ENCODE measurements at regions of chr17 and their contacts with region 1.

Region 1: DNA sequence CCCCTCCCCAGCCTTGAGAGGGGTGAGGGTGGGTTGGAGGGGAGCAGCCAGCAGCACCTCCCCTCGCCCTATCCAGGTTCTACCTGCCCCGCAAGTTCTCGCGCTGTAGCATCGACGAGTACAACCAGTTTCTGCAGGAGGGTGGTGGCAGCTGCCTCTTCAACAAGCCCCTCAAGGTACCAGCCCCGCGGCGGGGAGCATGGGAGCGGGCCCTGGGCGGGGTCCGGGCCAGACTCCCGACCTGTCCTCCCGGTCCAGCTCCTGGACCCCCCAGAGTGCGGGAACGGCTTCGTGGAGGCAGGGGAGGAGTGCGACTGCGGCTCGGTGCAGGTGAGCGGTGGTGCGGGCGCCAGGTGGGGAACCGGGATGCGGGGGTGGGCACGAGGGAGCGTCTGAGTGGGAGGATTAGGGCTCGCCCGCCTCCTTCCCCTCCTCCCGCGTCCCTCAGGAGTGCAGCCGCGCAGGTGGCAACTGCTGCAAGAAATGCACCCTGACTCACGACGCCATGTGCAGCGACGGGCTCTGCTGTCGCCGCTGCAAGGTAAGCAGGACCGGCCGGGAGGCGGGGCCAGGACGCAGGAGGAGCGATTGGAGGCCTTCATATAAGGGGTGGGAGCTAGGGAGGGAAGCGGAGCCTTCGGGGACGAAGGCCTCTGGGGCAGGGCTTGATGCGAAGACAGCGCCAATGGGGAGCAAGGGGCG is 16.5 kb downstream of the ADAM11 start:
- DNase-seq: peak; percentile 91
- ATAC-seq: peak; percentile 96
- H3K4me3 ChIP-seq: peak overlapping the region; percentile 76; the same call in 1 of the 2 replicates
- H3K27ac ChIP-seq: no peak overlapping the region
- H3K4me1 ChIP-seq: peaks cover 6% of the 10 kb centered on the region; the same call in 1 of the 2 replicates
- H3K27me3 ChIP-seq: no peaks in the 10 kb centered on the region; a peak in 1 of 4 replicates
- CTCF ChIP-seq: no peak
- EP300 ChIP-seq: no peak
- POLR2A ChIP-seq: peak; percentile 69
- RAD21 ChIP-seq: no peak

Region 2: DNA sequence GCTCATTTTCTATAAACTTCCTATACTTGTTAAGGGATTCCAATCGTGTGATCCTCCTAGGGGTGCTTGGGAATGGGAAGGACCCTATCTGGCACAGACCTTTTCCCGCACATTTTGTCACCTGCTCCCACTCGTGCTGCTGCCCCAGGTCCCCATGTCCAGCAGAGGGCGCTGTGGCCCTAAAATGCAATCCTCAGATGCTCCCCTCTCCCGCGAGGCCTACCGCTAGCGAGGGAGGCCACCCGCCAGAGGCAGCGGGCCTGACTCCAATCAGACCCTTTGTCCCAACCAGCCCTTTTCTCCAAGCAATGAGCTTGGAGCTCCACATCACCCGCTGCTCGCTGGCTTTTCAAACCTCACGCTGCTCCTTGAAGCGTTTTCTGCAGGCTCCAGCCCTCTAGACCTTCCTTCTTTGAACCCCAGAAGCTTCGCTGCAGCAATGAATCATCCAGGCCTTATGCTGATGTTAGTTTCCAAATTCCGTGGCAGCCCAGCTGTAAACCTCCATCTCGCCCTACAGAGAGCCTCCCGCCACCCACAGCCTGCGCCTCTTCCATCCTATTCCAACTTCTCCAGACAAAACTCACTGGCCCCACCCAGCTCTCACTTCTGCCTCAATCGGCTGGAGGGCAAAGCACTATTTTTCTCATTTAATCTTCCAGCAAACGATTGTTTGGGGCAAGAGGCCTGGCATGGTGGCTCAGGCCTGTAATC is 241.6 kb before region 1 on chr17:
- CTCF ChIA-PET with region 1: interaction called, 4 read pairs
- POLR2A ChIA-PET with region 1: no interaction called
- RAD21 ChIA-PET with region 1: no interaction called
- SMC1A ChIA-PET with region 1: interaction called, 5 read pairs
- in situ Hi-C with region 1: no loop called
- intact Hi-C with region 1: loop called (anchors 10 kb)
- DNase-seq: no peak
- ATAC-seq: peak; percentile 99
- H3K4me3 ChIP-seq: no peak overlapping the region
- H3K27ac ChIP-seq: no peak overlapping the region
- H3K4me1 ChIP-seq: peaks cover 10% of the 10 kb centered on the region
- H3K27me3 ChIP-seq: no peaks in the 10 kb centered on the region
- CTCF ChIP-seq: peak; percentile 93 to 98 (median 95)
- EP300 ChIP-seq: no peak
- POLR2A ChIP-seq: no peak
- RAD21 ChIP-seq: peak; percentile 94

Region 3: GRCh38 chr17:44797802-44798201 is 22.5 kb after region 1 on chr17:
- CTCF ChIA-PET with region 1: interaction called, 13 read pairs
- POLR2A ChIA-PET with region 1: no interaction called
- RAD21 ChIA-PET with region 1: interaction called, 3 read pairs
- SMC1A ChIA-PET with region 1: no interaction called
- in situ Hi-C with region 1: no loop called
- intact Hi-C with region 1: no loop called
- DNase-seq: no peak
- ATAC-seq: no peak
- H3K4me3 ChIP-seq: no peak overlapping the region
- H3K27ac ChIP-seq: no peak overlapping the region
- H3K4me1 ChIP-seq: no peaks in the 10 kb centered on the region
- H3K27me3 ChIP-seq: no peaks in the 10 kb centered on the region
- CTCF ChIP-seq: no peak
- EP300 ChIP-seq: no peak
- POLR2A ChIP-seq: no peak
- RAD21 ChIP-seq: no peak

Region 4: GRCh38 chr17:44864866-44865660 is 89.8 kb after region 1 on chr17:
- CTCF ChIA-PET with region 1: interaction called, 175 read pairs
- POLR2A ChIA-PET with region 1: no interaction called
- RAD21 ChIA-PET with region 1: interaction called, 13 read pairs
- SMC1A ChIA-PET with region 1: interaction called, 19 read pairs
- in situ Hi-C with region 1: loop called (anchors 5 kb)
- intact Hi-C with region 1: loop called (anchors 1 kb)
- DNase-seq: no peak
- ATAC-seq: peak; percentile 92
- H3K4me3 ChIP-seq: no peak overlapping the region
- H3K27ac ChIP-seq: no peak overlapping the region
- H3K4me1 ChIP-seq: no peaks in the 10 kb centered on the region
- H3K27me3 ChIP-seq: no peaks in the 10 kb centered on the region
- CTCF ChIP-seq: peak; percentile 72 to 88 (median 78)
- EP300 ChIP-seq: no peak
- POLR2A ChIP-seq: no peak
- RAD21 ChIP-seq: peak; percentile 58

Region 5: GRCh38 chr17:44878627-44879221 is 103.4 kb after region 1 on chr17:
- CTCF ChIA-PET with region 1: interaction called, 21 read pairs
- POLR2A ChIA-PET with region 1: no interaction called
- RAD21 ChIA-PET with region 1: interaction called, 5 read pairs
- SMC1A ChIA-PET with region 1: interaction called, 4 read pairs
- in situ Hi-C with region 1: no loop called
- intact Hi-C with region 1: no loop called
- DNase-seq: no peak
- ATAC-seq: 0 out of 3 replicates have a peak, but pooled peaks have one; percentile 18
- H3K4me3 ChIP-seq: no peak overlapping the region
- H3K27ac ChIP-seq: no peak overlapping the region
- H3K4me1 ChIP-seq: no peaks in the 10 kb centered on the region
- H3K27me3 ChIP-seq: no peaks in the 10 kb centered on the region
- CTCF ChIP-seq: peak; percentile 43 to 58 (median 45); a peak in 5 of 6 replicates
- EP300 ChIP-seq: no peak
- POLR2A ChIP-seq: no peak
- RAD21 ChIP-seq: peak; percentile 34

Region 6: GRCh38 chr17:45021607-45022287 is 246.5 kb after region 1 on chr17:
- CTCF ChIA-PET with region 1: interaction called, 12 read pairs
- POLR2A ChIA-PET with region 1: interaction called, 5 read pairs
- RAD21 ChIA-PET with region 1: interaction called, 3 read pairs
- SMC1A ChIA-PET with region 1: no interaction called
- in situ Hi-C with region 1: no loop called
- intact Hi-C with region 1: loop called (anchors 5 kb)
- DNase-seq: no peak
- ATAC-seq: peak; percentile 86
- H3K4me3 ChIP-seq: no peak overlapping the region
- H3K27ac ChIP-seq: no peak overlapping the region
- H3K4me1 ChIP-seq: peaks cover 29% of the 10 kb centered on the region
- H3K27me3 ChIP-seq: peaks cover 0 to 6% of the 10 kb centered on the region in 2 experiments; a peak in 2 of 4 replicates
- CTCF ChIP-seq: peak; percentile 62 to 89 (median 74); a peak in 5 of 6 replicates
- EP300 ChIP-seq: no peak
- POLR2A ChIP-seq: peak; percentile 44; the same call in 1 of the 2 replicates
- RAD21 ChIP-seq: peak; percentile 74

Region 7: DNA sequence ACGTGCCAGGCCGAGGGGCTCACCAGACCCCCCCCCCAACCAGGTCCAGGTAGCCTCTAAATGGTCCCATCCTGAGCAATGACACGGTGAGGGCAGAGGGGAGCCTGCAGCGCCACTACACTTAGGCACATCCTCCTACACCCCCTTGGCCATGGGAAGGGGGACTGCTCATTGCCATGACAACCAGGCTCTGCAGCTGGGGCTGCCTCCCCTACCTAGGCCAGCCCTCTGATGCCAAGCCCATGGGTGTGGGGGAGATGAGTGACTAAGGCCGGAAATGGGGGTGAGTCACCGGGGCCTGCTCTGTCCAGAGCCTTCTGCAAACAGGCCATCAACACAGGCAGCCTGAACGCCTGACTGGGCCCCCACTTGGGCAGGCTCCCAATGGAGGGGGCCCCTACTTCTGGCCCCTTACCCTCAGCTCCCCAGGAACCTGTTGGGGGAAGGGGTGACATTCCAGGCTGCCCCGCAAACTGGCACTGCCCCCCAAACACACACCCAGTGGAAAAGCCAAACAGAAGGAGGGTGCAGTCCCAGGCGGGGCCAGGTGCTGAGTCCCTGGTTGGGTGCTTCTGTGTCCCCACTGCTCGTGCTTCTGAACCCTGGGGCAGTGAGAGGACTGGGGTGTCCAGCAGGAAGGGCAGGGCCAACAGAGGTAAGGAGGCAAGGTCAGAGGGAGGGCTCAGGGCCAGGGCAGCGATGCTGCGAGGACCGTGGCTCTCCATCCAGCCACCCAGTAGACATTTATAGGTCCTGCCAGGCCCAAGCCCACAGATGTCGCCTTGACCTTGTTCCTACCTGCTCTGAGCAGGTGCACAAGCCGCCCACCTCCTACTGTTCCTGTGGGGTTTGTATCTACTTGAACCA is 348.9 kb after region 1 on chr17:
- CTCF ChIA-PET with region 1: no interaction called
- POLR2A ChIA-PET with region 1: no interaction called
- RAD21 ChIA-PET with region 1: no interaction called
- SMC1A ChIA-PET with region 1: no interaction called
- in situ Hi-C with region 1: loop called (anchors 10 kb)
- intact Hi-C with region 1: no loop called
- DNase-seq: no peak
- ATAC-seq: peak; percentile 92
- H3K4me3 ChIP-seq: no peak overlapping the region
- H3K27ac ChIP-seq: no peak overlapping the region
- H3K4me1 ChIP-seq: no peaks in the 10 kb centered on the region
- H3K27me3 ChIP-seq: no peaks in the 10 kb centered on the region
- CTCF ChIP-seq: no peak
- EP300 ChIP-seq: no peak
- POLR2A ChIP-seq: no peak
- RAD21 ChIP-seq: no peak